ENCODE measurements at regions of chr5 and their contacts with region 1.

Region 1: GRCh38 chr5:138035605-138036537 is 3.0 kb upstream of the FAM13B start:
- DNase-seq: peak; percentile 74
- ATAC-seq: peak; percentile 74
- H3K4me3 Mint-ChIP-seq: no peak overlapping the region
- H3K27ac Mint-ChIP-seq: no peak overlapping the region
- H3K4me1 Mint-ChIP-seq: peaks cover 26% of the 10 kb centered on the region
- H3K27me3 Mint-ChIP-seq: no peaks in the 10 kb centered on the region

Region 2: DNA sequence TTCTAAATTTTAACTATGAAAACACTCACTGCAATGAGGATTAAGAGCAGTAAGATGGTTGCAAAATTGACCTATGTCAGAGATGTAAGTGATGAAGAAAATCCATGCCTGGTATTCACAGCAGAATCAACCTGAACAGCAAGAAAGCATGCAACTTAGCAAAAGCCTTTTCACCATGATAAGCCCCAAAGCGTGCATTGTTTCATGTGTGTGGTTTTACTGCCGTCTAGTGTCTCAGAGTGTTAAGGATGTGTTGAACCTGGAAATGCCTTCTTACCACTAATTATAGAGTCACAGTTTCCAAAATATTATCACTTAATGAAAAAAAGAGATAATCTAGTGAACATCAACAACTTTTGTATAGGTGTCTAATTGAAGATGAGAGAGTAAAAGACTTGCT is 1255.3 kb before region 1 on chr5:
- CTCF ChIA-PET with region 1: no interaction called
- POLR2A ChIA-PET with region 1: no interaction called
- intact Hi-C with region 1: no loop called
- DNase-seq: no peak
- ATAC-seq: no peak
- H3K4me3 Mint-ChIP-seq: no peak overlapping the region
- H3K27ac Mint-ChIP-seq: no peak overlapping the region
- H3K4me1 Mint-ChIP-seq: no peaks in the 10 kb centered on the region
- H3K27me3 Mint-ChIP-seq: peaks cover 2% of the 10 kb centered on the region

Region 3: GRCh38 chr5:137778772-137779564 is 256.9 kb before region 1 on chr5:
- CTCF ChIA-PET with region 1: interaction called, 4 read pairs
- POLR2A ChIA-PET with region 1: no interaction called
- intact Hi-C with region 1: loop called in 1 of 2 experiments (anchors 1 kb)
- DNase-seq: no peak
- ATAC-seq: no peak
- H3K4me3 Mint-ChIP-seq: no peak overlapping the region
- H3K27ac Mint-ChIP-seq: no peak overlapping the region
- H3K4me1 Mint-ChIP-seq: no peaks in the 10 kb centered on the region
- H3K27me3 Mint-ChIP-seq: no peaks in the 10 kb centered on the region

Region 4: DNA sequence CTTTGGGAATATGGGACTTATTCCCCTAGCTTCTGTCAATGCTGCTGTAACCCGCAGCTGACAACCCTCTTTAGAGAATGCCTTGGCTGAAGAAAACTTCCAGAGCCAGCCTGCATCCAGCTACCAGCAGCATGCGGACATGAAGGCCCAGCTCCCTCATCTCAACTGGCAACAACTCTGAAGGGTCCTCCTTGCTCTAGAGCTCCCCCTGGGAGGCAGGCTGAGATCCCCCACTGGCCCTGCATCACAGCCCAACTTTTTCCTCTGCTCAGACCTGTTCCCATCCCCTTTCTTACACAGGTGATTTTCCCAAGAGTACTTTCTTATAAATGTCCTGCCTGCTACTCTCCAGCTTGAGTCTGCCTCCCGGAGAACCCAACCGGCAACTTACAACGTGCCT is 29.2 kb after region 1 on chr5:
- CTCF ChIA-PET with region 1: interaction called, 182 read pairs
- POLR2A ChIA-PET with region 1: no interaction called
- intact Hi-C with region 1: loop called (anchors 1 kb)
- DNase-seq: peak; percentile 40
- ATAC-seq: no peak
- H3K4me3 Mint-ChIP-seq: no peak overlapping the region
- H3K27ac Mint-ChIP-seq: no peak overlapping the region
- H3K4me1 Mint-ChIP-seq: peaks cover 4% of the 10 kb centered on the region
- H3K27me3 Mint-ChIP-seq: no peaks in the 10 kb centered on the region

Region 5: GRCh38 chr5:138178516-138179276 is 142.8 kb after region 1 on chr5 and contains the starts of genes BRD8 and KIF20A:
- CTCF ChIA-PET with region 1: interaction called, 7 read pairs
- POLR2A ChIA-PET with region 1: no interaction called
- intact Hi-C with region 1: loop called in 1 of 2 experiments (anchors 1 kb)
- DNase-seq: peak; percentile 96
- ATAC-seq: peak; percentile 93
- H3K4me3 Mint-ChIP-seq: no peak within 1 kb of the TSS
- H3K27ac Mint-ChIP-seq: peak within 1 kb of the TSS; percentile 73
- H3K4me1 Mint-ChIP-seq: peaks cover 16% of the 10 kb centered on the region
- H3K27me3 Mint-ChIP-seq: no peaks in the 10 kb centered on the region
- total RNA-seq, gene BRD8: 60.7 to 61.4 TPM
- total RNA-seq, gene KIF20A: 66.6 to 76.3 TPM

Region 6: GRCh38 chr5:138337685-138338410 is 302.0 kb after region 1 on chr5 and contains the start of gene FAM53C:
- CTCF ChIA-PET with region 1: no interaction called
- POLR2A ChIA-PET with region 1: no interaction called
- intact Hi-C with region 1: loop called in 1 of 2 experiments (anchors 5 kb)
- DNase-seq: peak; percentile 95
- ATAC-seq: peak; percentile 88
- H3K4me3 Mint-ChIP-seq: peak within 1 kb of the TSS; percentile 84
- H3K27ac Mint-ChIP-seq: peak within 1 kb of the TSS; percentile 97
- H3K4me1 Mint-ChIP-seq: peaks cover 38% of the 10 kb centered on the region
- H3K27me3 Mint-ChIP-seq: no peaks in the 10 kb centered on the region
- total RNA-seq, gene FAM53C: 22.8 to 25.9 TPM

Region 7: GRCh38 chr5:138542956-138543729 is 507.3 kb after region 1 on chr5 and contains the start of gene ETF1:
- CTCF ChIA-PET with region 1: no interaction called
- POLR2A ChIA-PET with region 1: no interaction called
- intact Hi-C with region 1: loop called in 1 of 2 experiments (anchors 1 kb)
- DNase-seq: peak; percentile 100
- ATAC-seq: peak; percentile 94
- H3K4me3 Mint-ChIP-seq: peak within 1 kb of the TSS; percentile 100
- H3K27ac Mint-ChIP-seq: peak within 1 kb of the TSS; percentile 100
- H3K4me1 Mint-ChIP-seq: peaks cover 67% of the 10 kb centered on the region
- H3K27me3 Mint-ChIP-seq: no peaks in the 10 kb centered on the region
- total RNA-seq, gene ETF1: 140 to 156 TPM

Measured in activated CD4-positive, alpha-beta T cell treated with anti-CD3 and anti-CD28 coated beads for 36 hours (primary cell).